Left colon (tissue), 2 donors: ENCODE measurements at regions of chr15 and their contacts with region 1.

Region 1: DNA sequence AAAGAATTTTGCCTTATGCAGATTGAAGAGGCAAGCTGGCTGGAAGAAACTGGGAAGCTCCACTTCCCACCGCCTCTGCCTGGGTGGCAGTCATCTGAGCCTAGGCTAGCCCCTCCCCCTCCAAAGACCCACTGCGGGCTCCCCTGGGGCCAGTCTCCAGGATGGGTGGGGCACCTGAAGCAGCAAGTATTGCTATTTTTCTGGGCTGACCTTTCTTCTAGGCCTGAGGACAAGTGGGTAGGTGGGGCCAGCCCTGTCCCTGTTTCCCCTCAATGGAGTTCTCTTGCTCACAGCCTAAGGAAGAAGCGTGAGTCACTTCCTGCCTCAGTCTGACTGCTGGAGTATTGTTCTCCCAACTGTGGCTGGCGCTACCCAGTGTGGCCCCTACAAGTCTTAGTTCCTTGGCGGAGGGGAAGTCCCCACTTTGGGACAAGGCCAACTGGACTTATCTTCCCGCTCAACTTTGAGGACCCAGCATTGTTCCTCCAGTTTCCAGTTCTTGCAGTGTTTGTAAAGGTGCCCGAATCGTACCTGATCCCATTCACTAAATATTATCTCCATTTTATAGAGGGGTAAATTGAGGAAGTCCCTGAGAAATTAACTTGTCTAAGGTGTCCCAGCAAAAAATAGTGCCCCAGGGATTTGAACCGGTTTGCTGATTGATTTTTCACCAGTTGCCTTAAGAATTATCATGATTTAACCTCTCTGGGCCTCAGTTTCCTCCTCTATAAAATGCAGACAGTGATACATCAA is 1.4 kb downstream of the FURIN start:
- DNase-seq: peak; percentile 66 to 75
- ATAC-seq: peak; percentile 28

Region 2: DNA sequence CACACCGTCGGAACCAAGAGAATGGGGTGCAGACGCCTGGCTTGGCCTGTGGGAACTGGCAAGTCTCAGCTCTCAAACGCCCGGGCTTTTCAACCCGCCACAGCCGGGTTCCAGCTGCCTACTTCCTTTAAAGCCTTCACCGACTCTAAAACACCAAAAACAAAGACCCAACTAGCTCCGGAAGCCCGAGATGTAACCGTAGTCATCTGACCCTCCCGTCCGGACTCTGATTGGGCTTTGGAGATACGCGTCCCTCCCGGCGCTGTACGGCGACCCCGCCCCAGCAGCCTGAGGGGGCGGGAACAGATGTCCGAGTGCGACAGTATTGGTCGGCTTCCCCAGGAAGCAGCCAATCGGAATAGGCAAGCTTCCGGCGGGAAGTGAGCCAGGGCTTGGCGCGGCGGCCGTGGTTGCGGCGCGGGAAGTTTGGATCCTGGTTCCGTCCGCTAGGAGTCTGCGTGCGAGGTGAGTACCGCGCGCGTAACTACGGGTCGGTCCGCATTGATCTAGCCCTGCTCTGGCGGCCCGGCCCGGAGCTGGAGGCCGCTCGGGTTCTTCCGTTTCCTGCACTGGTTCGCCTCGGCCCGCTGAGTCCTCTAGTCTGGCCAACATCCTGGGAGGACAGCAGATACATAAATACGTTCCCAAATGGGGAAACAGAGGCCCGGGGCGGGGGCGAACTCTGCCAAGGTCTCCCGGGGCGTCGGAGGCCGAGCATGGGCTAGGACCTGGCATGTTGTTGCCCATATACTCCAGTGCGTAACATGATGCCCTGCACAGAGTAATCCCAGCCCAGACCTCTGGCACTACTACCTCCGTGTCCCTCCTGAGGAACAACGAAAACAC is 152.6 kb before region 1 on chr15 and contains the start of gene BLM:
- intact Hi-C with region 1: loop called in 1 of 2 experiments (anchors 10 kb)
- DNase-seq: peak; percentile 94 to 96
- ATAC-seq: peak; percentile 99
- total RNA-seq, gene BLM: 3.3 to 3.6 TPM

Region 3: GRCh38 chr15:90915808-90916440 is 46.1 kb after region 1 on chr15:
- intact Hi-C with region 1: no loop called
- DNase-seq: peak; percentile 34 to 56
- ATAC-seq: no peak